Natural killer cell (primary cell): ENCODE measurements at regions of chr3 and their contacts with region 1.

Region 1: DNA sequence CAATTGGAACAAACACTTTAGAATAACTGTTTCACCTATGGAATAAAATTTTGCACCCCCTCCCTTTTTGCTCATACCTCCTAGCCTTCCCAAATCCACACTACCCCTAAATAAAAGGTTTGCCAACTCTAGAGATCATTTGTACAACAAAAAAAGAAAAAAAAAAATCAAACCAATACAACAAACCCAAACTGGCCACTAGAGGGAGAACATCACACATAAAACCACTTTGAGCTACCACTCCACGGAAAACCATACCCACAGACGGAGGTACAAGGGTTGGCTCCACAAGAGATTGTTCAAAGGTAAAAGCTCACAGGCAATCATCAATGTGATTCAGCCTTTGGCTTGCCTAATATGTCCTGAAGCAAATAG is 47.6 kb downstream of the SETMAR start:
- DNase-seq: peak; percentile 49 to 89
- ATAC-seq: peak; percentile 67 to 86 (median 79)
- H3K4me3 ChIP-seq: peak overlapping the region; percentile 60
- H3K4me3 Mint-ChIP-seq: peak overlapping the region; percentile 82
- H3K27ac ChIP-seq: peak overlapping the region; percentile 88
- H3K27ac Mint-ChIP-seq: peak overlapping the region; percentile 92 to 94
- H3K4me1 ChIP-seq: peaks cover 3% of the 10 kb centered on the region
- H3K4me1 Mint-ChIP-seq: peaks cover 19 to 25% of the 10 kb centered on the region in 2 donors
- H3K27me3 ChIP-seq: no peaks in the 10 kb centered on the region
- H3K27me3 Mint-ChIP-seq: no peaks in the 10 kb centered on the region
- CTCF ChIP-seq: peak; percentile 80

Region 2: DNA sequence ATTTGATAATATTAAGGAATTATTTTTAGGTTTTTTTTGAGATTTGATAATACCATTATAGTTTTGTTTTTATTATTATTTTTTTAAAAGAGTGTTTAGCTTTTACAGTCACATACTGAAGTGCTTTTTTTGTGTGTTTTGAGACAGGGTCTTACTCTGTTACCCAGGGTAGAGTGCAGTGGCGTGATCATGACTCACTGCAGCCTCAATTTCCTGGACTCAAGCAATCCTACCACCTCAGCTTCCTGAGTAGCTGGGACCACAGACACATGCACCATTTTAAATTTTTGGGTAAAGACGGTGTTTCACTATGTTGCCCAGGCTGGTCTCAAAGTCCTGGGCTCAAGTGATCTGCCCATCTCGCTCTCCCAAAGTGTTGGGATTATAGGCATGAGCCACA is 43.3 kb after region 1 on chr3:
- intact Hi-C with region 1: loop called (anchors 5 kb)
- DNase-seq: peak; percentile 38 to 40
- ATAC-seq: peak; percentile 77 to 86 (median 78)
- H3K4me3 ChIP-seq: no peak overlapping the region
- H3K4me3 Mint-ChIP-seq: peak overlapping the region; percentile 68
- H3K27ac ChIP-seq: peak overlapping the region; percentile 71
- H3K27ac Mint-ChIP-seq: peak overlapping the region; percentile 85 to 87
- H3K4me1 ChIP-seq: peaks cover 23% of the 10 kb centered on the region
- H3K4me1 Mint-ChIP-seq: peaks cover 41 to 45% of the 10 kb centered on the region in 2 donors
- H3K27me3 ChIP-seq: no peaks in the 10 kb centered on the region
- H3K27me3 Mint-ChIP-seq: no peaks in the 10 kb centered on the region
- CTCF ChIP-seq: no peak

Region 3: GRCh38 chr3:4438293-4438692 is 87.5 kb after region 1 on chr3:
- intact Hi-C with region 1: no loop called
- DNase-seq: no peak
- ATAC-seq: no peak
- H3K4me3 ChIP-seq: no peak overlapping the region
- H3K4me3 Mint-ChIP-seq: no peak overlapping the region
- H3K27ac ChIP-seq: no peak overlapping the region
- H3K27ac Mint-ChIP-seq: no peak overlapping the region
- H3K4me1 ChIP-seq: no peaks in the 10 kb centered on the region
- H3K4me1 Mint-ChIP-seq: peaks cover 0 to 4% of the 10 kb centered on the region in 2 donors
- H3K27me3 ChIP-seq: no peaks in the 10 kb centered on the region
- H3K27me3 Mint-ChIP-seq: no peaks in the 10 kb centered on the region
- CTCF ChIP-seq: no peak

Region 4: GRCh38 chr3:4493014-4493940 is 142.5 kb after region 1 on chr3 and contains the start of gene ITPR1:
- intact Hi-C with region 1: loop called (anchors 1 kb)
- DNase-seq: peak; percentile 91 to 99
- ATAC-seq: peak; percentile 91 to 97 (median 92)
- H3K4me3 ChIP-seq: peak within 1 kb of the TSS; percentile 87
- H3K4me3 Mint-ChIP-seq: peak within 1 kb of the TSS; percentile 99
- H3K27ac ChIP-seq: peak within 1 kb of the TSS; percentile 58
- H3K27ac Mint-ChIP-seq: peak within 1 kb of the TSS; percentile 85 to 92
- H3K4me1 ChIP-seq: peaks cover 24% of the 10 kb centered on the region
- H3K4me1 Mint-ChIP-seq: peaks cover 41 to 52% of the 10 kb centered on the region in 2 donors
- H3K27me3 ChIP-seq: no peaks in the 10 kb centered on the region
- H3K27me3 Mint-ChIP-seq: peaks cover 0 to 4% of the 10 kb centered on the region in 2 donors
- CTCF ChIP-seq: no peak
- total RNA-seq, gene ITPR1: 86.7 to 123 (median 94.8) TPM

Region 5: DNA sequence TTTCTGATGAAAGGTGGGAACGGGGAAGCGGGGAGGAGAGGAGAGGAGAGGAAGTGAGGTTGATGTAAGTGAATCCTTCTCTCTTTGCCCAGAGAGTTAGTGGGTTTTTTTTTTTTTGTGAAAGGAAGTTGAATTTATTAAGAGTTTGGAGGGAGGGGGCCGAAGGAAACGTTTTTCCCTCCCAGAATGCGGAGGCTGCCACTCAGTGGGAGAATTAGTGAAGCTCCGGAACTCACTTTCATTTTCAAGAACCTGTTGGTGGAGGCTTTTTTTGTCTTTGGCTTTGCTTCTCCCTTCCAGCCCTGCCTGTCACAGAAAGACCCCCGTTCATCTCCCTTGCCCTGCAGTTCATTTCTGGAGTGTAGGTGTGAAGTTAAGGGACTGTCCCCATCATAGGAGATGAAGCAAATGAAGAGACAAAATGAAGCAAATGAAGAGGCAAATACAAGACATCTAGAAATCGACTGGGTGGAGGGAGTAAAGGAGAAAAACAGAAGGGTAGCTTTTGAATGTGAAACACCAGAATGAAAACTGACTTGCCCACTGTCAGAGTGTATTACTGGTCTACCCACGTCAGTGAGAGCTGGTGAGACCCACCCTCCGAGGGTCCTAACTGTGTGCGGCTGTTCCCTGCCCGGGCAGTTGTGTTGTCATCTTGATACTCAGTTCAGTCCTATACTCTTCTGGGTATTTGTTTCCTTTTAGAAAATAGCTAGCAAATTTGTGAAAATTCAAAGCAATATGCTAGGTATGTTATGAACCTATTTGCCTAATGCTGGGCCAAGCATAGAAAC is 233.9 kb after region 1 on chr3:
- intact Hi-C with region 1: loop called (anchors 5 kb)
- DNase-seq: peak in 1 of 2 donors; percentile 55
- ATAC-seq: peak; percentile 37 to 55 (median 49)
- H3K4me3 ChIP-seq: no peak overlapping the region
- H3K4me3 Mint-ChIP-seq: peak overlapping the region; percentile 87
- H3K27ac ChIP-seq: no peak overlapping the region
- H3K27ac Mint-ChIP-seq: peak overlapping the region; percentile 53 to 91
- H3K4me1 ChIP-seq: peaks cover 28% of the 10 kb centered on the region
- H3K4me1 Mint-ChIP-seq: peaks cover 64 to 79% of the 10 kb centered on the region in 2 donors
- H3K27me3 ChIP-seq: no peaks in the 10 kb centered on the region
- H3K27me3 Mint-ChIP-seq: no peaks in the 10 kb centered on the region
- CTCF ChIP-seq: no peak

Region 6: DNA sequence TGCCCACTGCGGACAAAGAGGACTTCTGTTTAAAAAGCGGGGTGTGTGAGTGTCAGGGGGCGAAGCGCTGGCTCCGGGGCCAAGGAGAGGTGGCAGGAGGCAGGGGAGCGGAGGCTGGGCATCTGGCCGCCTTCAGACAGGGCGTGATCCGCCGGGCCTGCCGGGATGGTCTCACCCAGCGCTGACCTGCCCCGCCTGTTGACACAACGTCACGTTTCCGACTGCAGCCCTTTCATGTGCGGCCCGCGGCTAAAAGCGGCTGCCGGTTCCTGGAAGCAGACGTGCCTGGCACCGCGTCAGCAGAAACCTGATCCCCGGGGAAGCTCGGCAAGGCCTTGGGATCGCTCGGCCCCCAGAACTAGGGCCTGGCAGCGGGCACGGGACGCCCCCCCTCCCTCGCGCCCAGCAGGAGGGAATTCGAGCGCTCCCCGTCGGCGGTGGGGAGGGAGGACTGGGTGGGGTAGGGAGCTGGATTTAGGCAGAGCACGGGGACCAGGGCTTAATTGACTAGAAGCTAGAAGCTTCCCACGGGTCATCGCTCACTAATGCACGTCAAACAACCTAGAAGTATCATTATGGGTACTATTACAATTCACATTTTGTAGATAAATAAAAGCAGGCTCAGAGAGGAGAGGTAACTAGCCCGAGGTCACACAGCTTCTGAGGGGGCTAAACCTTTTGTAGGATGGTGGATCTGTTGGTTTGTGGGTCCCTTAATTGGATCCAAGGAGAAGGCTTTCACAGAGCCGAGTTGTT is 636.2 kb after region 1 on chr3:
- intact Hi-C with region 1: loop called (anchors 10 kb)
- DNase-seq: peak; percentile 79 to 82
- ATAC-seq: peak; percentile 69 to 88 (median 71)
- H3K4me3 ChIP-seq: peak overlapping the region; percentile 50
- H3K4me3 Mint-ChIP-seq: peak overlapping the region; percentile 87
- H3K27ac ChIP-seq: peak overlapping the region; percentile 85
- H3K27ac Mint-ChIP-seq: peak overlapping the region; percentile 98 to 100
- H3K4me1 ChIP-seq: peaks cover 54% of the 10 kb centered on the region
- H3K4me1 Mint-ChIP-seq: peaks cover 51 to 59% of the 10 kb centered on the region in 2 donors
- H3K27me3 ChIP-seq: no peaks in the 10 kb centered on the region
- H3K27me3 Mint-ChIP-seq: no peaks in the 10 kb centered on the region
- CTCF ChIP-seq: no peak